ENCODE measurements at regions of chr20 and their contacts with region 1.

Region 1: GRCh38 chr20:64062596-64063388 is at the start of gene TCEA2:
- DNase-seq: peak; percentile 78
- H3K4me3 ChIP-seq: peak within 1 kb of the TSS; percentile 88
- H3K27ac ChIP-seq: peak within 1 kb of the TSS; percentile 80
- H3K27me3 ChIP-seq: no peaks in the 10 kb centered on the region
- CTCF ChIP-seq: no peak
- polyA plus RNA-seq, gene TCEA2: 12.8 and 18.0 TPM in 2 replicates

Region 2: GRCh38 chr20:63957690-63958441 is 104.9 kb before region 1 on chr20:
- CTCF ChIA-PET with region 1: interaction called, 11 read pairs
- POLR2A ChIA-PET with region 1: no interaction called
- DNase-seq: no peak
- H3K4me3 ChIP-seq: no peak overlapping the region
- H3K27ac ChIP-seq: peak overlapping the region; percentile 68
- H3K27me3 ChIP-seq: no peaks in the 10 kb centered on the region
- CTCF ChIP-seq: no peak

Region 3: GRCh38 chr20:64001607-64002011 is 61.2 kb before region 1 on chr20:
- CTCF ChIA-PET with region 1: interaction called, 10 read pairs
- POLR2A ChIA-PET with region 1: no interaction called
- DNase-seq: no peak
- H3K4me3 ChIP-seq: no peak overlapping the region
- H3K27ac ChIP-seq: no peak overlapping the region
- H3K27me3 ChIP-seq: no peaks in the 10 kb centered on the region
- CTCF ChIP-seq: no peak